PC-9 (cell line): ENCODE measurements at regions of chr20 and their contacts with region 1.

Region 1: GRCh38 chr20:3262566-3262965 is 23.6 kb upstream of the SLC4A11 start:
- DNase-seq: no peak
- H3K4me3 ChIP-seq: no peak overlapping the region
- H3K27ac ChIP-seq: no peak overlapping the region
- H3K4me1 ChIP-seq: no peaks in the 10 kb centered on the region
- H3K27me3 ChIP-seq: no peaks in the 10 kb centered on the region
- CTCF ChIP-seq: no peak

Region 2: GRCh38 chr20:2865630-2866029 is 396.9 kb before region 1 on chr20:
- CTCF ChIA-PET with region 1: no interaction called
- POLR2A ChIA-PET with region 1: no interaction called
- intact Hi-C with region 1: no loop called
- DNase-seq: no peak
- H3K4me3 ChIP-seq: no peak overlapping the region
- H3K27ac ChIP-seq: no peak overlapping the region
- H3K4me1 ChIP-seq: peaks cover 5% of the 10 kb centered on the region; the same call in 1 of the 2 replicates
- H3K27me3 ChIP-seq: no peaks in the 10 kb centered on the region
- CTCF ChIP-seq: no peak

Region 3: DNA sequence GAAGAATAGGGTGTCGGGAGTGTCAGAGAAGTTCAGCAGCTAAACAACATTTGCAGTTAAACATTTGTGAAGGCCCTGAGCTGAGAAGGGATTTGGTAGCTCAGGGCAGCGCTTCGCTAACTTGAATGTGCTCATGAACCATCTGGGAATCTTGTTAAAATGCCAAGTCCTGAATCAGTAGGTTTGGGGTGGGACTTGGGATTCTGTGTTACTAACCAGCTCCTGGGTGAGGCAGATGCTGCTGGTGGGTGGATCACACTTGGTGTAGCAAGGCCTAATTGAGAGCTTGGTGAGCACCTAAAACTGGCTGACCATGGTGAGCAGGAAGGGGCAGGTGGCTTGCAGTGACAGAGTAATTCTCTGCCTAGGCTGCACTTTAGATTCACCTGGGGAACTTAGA is 383.4 kb before region 1 on chr20:
- CTCF ChIA-PET with region 1: no interaction called
- POLR2A ChIA-PET with region 1: no interaction called
- intact Hi-C with region 1: no loop called
- DNase-seq: no peak
- H3K4me3 ChIP-seq: no peak overlapping the region
- H3K27ac ChIP-seq: no peak overlapping the region
- H3K4me1 ChIP-seq: peaks cover 7% of the 10 kb centered on the region; the same call in 1 of the 2 replicates
- H3K27me3 ChIP-seq: no peaks in the 10 kb centered on the region
- CTCF ChIP-seq: no peak

Region 4: DNA sequence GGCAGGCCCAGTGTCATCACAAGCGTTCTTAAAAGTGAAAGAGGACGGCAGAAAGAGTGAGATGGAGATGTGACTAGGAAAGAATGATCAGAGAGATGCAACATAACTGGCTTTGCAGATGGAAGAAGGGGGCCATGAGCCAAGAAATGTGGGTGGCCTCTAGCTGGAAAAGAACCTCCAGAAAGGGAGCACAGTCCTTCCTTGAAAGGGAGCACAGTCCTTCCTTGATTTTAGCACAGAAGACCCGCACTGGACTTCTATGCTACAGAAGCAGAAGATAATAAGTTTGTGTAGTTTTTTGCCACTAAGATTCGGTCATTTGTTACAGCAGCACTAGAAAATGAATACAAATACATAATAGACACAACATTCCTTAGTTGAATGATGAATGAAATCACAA is 82.2 kb before region 1 on chr20:
- CTCF ChIA-PET with region 1: no interaction called
- POLR2A ChIA-PET with region 1: interaction called, 15 read pairs
- intact Hi-C with region 1: no loop called
- DNase-seq: no peak
- H3K4me3 ChIP-seq: no peak overlapping the region
- H3K27ac ChIP-seq: no peak overlapping the region
- H3K4me1 ChIP-seq: peaks cover 3% of the 10 kb centered on the region
- H3K27me3 ChIP-seq: no peaks in the 10 kb centered on the region
- CTCF ChIP-seq: no peak

Region 5: GRCh38 chr20:3276680-3277015 is 14.1 kb after region 1 on chr20:
- CTCF ChIA-PET with region 1: interaction called, 14 read pairs
- POLR2A ChIA-PET with region 1: no interaction called
- intact Hi-C with region 1: no loop called
- DNase-seq: peak in 1 of 2 experiments; percentile 36
- H3K4me3 ChIP-seq: no peak overlapping the region
- H3K27ac ChIP-seq: no peak overlapping the region
- H3K4me1 ChIP-seq: no peaks in the 10 kb centered on the region
- H3K27me3 ChIP-seq: no peaks in the 10 kb centered on the region
- CTCF ChIP-seq: peak; percentile 65

Region 6: DNA sequence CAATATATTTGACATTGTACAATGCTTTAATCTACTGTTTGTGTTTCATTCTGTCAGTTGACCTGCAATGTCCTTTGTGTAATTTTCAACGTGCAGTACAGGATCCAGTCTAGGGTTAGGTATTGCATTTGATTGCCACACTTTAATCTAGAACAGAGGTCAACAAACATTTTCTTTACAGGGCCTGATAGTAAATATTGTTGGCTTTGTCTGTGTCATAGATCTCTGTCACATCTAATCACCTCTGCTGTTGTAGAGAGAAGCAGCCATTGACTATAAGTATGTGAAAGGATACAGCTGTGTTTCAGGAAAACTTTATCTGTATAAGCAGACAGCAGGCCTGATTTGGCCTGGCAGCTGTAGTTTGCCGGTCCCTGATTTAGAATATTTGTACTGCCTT is 247.5 kb after region 1 on chr20:
- CTCF ChIA-PET with region 1: no interaction called
- POLR2A ChIA-PET with region 1: no interaction called
- intact Hi-C with region 1: no loop called
- DNase-seq: no peak
- H3K4me3 ChIP-seq: no peak overlapping the region
- H3K27ac ChIP-seq: no peak overlapping the region
- H3K4me1 ChIP-seq: 0 out of 2 replicates have a peak, but pooled peaks cover 3% of the 10 kb centered on the region
- H3K27me3 ChIP-seq: no peaks in the 10 kb centered on the region
- CTCF ChIP-seq: no peak